Activated CD4-positive, alpha-beta T cell treated with anti-CD3 and anti-CD28 coated beads for 36 hours (primary cell): ENCODE measurements at regions of chr1 and their contacts with region 1.

Region 1: GRCh38 chr1:172002725-172003345 is 161.5 kb downstream of the DNM3 start:
- DNase-seq: peak; percentile 33
- ATAC-seq: no peak
- H3K4me3 Mint-ChIP-seq: no peak overlapping the region
- H3K27ac Mint-ChIP-seq: no peak overlapping the region
- H3K4me1 Mint-ChIP-seq: no peaks in the 10 kb centered on the region
- H3K27me3 Mint-ChIP-seq: no peaks in the 10 kb centered on the region

Region 2: GRCh38 chr1:171801487-171801891 is 201.3 kb before region 1 on chr1:
- CTCF ChIA-PET with region 1: interaction called, 12 read pairs
- POLR2A ChIA-PET with region 1: no interaction called
- intact Hi-C with region 1: no loop called
- DNase-seq: no peak
- ATAC-seq: peak; percentile 57
- H3K4me3 Mint-ChIP-seq: no peak overlapping the region
- H3K27ac Mint-ChIP-seq: no peak overlapping the region
- H3K4me1 Mint-ChIP-seq: peaks cover 4% of the 10 kb centered on the region
- H3K27me3 Mint-ChIP-seq: no peaks in the 10 kb centered on the region

Region 3: GRCh38 chr1:171984850-171985485 is 17.9 kb before region 1 on chr1:
- CTCF ChIA-PET with region 1: interaction called, 10 read pairs
- POLR2A ChIA-PET with region 1: no interaction called
- intact Hi-C with region 1: no loop called
- DNase-seq: peak; percentile 8
- ATAC-seq: peak; percentile 58
- H3K4me3 Mint-ChIP-seq: no peak overlapping the region
- H3K27ac Mint-ChIP-seq: no peak overlapping the region
- H3K4me1 Mint-ChIP-seq: no peaks in the 10 kb centered on the region
- H3K27me3 Mint-ChIP-seq: no peaks in the 10 kb centered on the region

Region 4: GRCh38 chr1:172429331-172430127 is 426.7 kb after region 1 on chr1:
- CTCF ChIA-PET with region 1: interaction called, 14 read pairs
- POLR2A ChIA-PET with region 1: no interaction called
- intact Hi-C with region 1: loop called in 1 of 2 experiments (anchors 2 kb)
- DNase-seq: peak; percentile 66
- ATAC-seq: peak; percentile 71
- H3K4me3 Mint-ChIP-seq: no peak overlapping the region
- H3K27ac Mint-ChIP-seq: no peak overlapping the region
- H3K4me1 Mint-ChIP-seq: peaks cover 30% of the 10 kb centered on the region
- H3K27me3 Mint-ChIP-seq: no peaks in the 10 kb centered on the region

Region 5: GRCh38 chr1:172449585-172450534 is 447.0 kb after region 1 on chr1:
- CTCF ChIA-PET with region 1: interaction called, 12 read pairs
- POLR2A ChIA-PET with region 1: no interaction called
- intact Hi-C with region 1: no loop called
- DNase-seq: peak; percentile 57
- ATAC-seq: peak; percentile 78
- H3K4me3 Mint-ChIP-seq: no peak overlapping the region
- H3K27ac Mint-ChIP-seq: no peak overlapping the region
- H3K4me1 Mint-ChIP-seq: peaks cover 23% of the 10 kb centered on the region
- H3K27me3 Mint-ChIP-seq: no peaks in the 10 kb centered on the region